Activated T-helper 1 cell treated with anti-CD3 and anti-CD28 coated beads, Interleukin-12 subunit alpha, Interleukin-12 subunit beta, Interleukin-2, Interleukin-4 antibody, amounts not matched to agents 30 ng/mL and 10 ng/mL and 1 ng/mL, durations not matched to agents 14 hours and 24 hours and 36 hours (primary cell): ENCODE measurements at regions of chr12 and their contacts with region 1.

Region 1: GRCh38 chr12:6423267-6424007 is 21.3 kb upstream of the CD27 start:
- DNase-seq: peak; percentile 75
- H3K4me3 Mint-ChIP-seq: no peak overlapping the region
- H3K27ac Mint-ChIP-seq: peak overlapping the region; percentile 50
- H3K4me1 Mint-ChIP-seq: peaks cover 44% of the 10 kb centered on the region
- H3K27me3 Mint-ChIP-seq: peaks cover 1% of the 10 kb centered on the region

Region 2: GRCh38 chr12:6335451-6336078 is 87.9 kb before region 1 on chr12:
- intact Hi-C with region 1: loop called (anchors 1 kb)
- DNase-seq: peak; percentile 80
- H3K4me3 Mint-ChIP-seq: no peak overlapping the region
- H3K27ac Mint-ChIP-seq: no peak overlapping the region
- H3K4me1 Mint-ChIP-seq: peaks cover 37% of the 10 kb centered on the region
- H3K27me3 Mint-ChIP-seq: no peaks in the 10 kb centered on the region

Region 3: GRCh38 chr12:6383572-6384498 is 39.6 kb before region 1 on chr12 and contains the start of gene LTBR:
- intact Hi-C with region 1: no loop called
- DNase-seq: no peak
- H3K4me3 Mint-ChIP-seq: no peak within 1 kb of the TSS
- H3K27ac Mint-ChIP-seq: no peak within 1 kb of the TSS
- H3K4me1 Mint-ChIP-seq: no peaks in the 10 kb centered on the region
- H3K27me3 Mint-ChIP-seq: peaks cover 39% of the 10 kb centered on the region
- total RNA-seq, gene LTBR: 0.64 and 1.3 TPM in 2 replicates

Region 4: DNA sequence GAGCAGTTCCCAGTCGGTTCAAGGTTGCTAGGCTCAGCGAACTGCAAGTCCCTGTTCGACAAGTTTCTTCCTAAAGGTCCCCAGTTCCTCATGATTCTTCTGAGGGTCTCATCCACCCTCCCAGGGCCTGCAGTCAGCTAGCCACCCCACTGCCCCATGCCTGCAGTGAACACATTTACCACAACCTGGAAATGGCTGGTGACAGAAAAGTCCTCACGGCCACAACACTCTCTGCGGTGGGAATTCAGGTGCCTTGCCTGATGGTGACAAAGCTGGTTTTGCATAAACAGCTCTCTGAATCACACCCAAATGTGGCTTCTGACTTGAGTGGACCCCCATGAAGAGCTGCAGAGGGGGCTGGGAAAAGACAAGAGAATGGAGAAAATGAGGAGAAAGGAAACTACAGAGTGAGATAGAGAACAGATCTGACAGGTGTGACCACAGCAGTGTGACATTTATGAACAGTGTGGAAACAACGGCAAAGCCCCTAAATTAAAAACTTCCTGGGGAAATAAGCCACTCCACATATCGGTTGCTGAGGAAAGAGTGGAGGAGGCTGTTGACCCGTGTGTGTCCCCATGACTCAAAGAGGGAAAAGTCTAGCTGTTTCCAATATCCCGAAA is 20.0 kb after region 1 on chr12:
- intact Hi-C with region 1: loop called (anchors 1 kb)
- DNase-seq: no peak
- H3K4me3 Mint-ChIP-seq: peak overlapping the region; percentile 93
- H3K27ac Mint-ChIP-seq: peak overlapping the region; percentile 97
- H3K4me1 Mint-ChIP-seq: peaks cover 82% of the 10 kb centered on the region
- H3K27me3 Mint-ChIP-seq: no peaks in the 10 kb centered on the region

Region 5: DNA sequence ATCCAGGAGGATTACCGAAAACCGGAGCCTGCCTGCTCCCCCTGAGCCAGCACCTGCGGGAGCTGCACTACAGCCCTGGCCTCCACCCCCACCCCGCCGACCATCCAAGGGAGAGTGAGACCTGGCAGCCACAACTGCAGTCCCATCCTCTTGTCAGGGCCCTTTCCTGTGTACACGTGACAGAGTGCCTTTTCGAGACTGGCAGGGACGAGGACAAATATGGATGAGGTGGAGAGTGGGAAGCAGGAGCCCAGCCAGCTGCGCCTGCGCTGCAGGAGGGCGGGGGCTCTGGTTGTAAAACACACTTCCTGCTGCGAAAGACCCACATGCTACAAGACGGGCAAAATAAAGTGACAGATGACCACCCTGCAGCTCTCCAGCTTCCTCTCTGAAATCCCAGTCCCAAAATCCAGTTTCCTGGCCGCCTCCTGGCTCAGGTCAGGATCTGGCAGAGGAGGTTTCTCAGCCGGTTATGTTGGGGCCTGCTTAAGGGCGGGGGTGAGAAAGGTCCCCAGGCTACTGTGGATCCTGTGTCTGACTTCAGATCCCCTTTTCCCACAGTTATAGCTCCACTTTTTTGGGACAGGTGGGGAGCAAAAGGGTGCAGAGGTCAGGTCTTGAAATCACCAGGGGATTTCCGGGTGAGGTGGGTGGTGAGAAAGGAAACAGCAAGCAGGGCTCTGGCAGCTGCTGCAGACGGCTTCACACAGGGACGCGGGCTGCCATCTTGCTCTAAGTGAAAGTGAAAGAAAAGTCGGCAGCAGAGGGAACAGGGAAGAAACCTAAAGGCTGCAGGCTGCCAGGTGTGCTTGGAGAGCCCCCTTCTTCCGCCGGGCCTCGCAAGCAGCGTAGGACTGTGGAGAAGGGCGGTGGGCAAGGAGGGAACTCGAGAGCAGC is 28.2 kb after region 1 on chr12 and contains the start of gene TAPBPL:
- intact Hi-C with region 1: loop called (anchors 1 kb)
- DNase-seq: peak; percentile 79
- H3K4me3 Mint-ChIP-seq: peak within 1 kb of the TSS; percentile 98
- H3K27ac Mint-ChIP-seq: peak within 1 kb of the TSS; percentile 91
- H3K4me1 Mint-ChIP-seq: peaks cover 72% of the 10 kb centered on the region
- H3K27me3 Mint-ChIP-seq: no peaks in the 10 kb centered on the region
- total RNA-seq, gene TAPBPL: 34.1 and 34.3 TPM in 2 replicates

Region 6: DNA sequence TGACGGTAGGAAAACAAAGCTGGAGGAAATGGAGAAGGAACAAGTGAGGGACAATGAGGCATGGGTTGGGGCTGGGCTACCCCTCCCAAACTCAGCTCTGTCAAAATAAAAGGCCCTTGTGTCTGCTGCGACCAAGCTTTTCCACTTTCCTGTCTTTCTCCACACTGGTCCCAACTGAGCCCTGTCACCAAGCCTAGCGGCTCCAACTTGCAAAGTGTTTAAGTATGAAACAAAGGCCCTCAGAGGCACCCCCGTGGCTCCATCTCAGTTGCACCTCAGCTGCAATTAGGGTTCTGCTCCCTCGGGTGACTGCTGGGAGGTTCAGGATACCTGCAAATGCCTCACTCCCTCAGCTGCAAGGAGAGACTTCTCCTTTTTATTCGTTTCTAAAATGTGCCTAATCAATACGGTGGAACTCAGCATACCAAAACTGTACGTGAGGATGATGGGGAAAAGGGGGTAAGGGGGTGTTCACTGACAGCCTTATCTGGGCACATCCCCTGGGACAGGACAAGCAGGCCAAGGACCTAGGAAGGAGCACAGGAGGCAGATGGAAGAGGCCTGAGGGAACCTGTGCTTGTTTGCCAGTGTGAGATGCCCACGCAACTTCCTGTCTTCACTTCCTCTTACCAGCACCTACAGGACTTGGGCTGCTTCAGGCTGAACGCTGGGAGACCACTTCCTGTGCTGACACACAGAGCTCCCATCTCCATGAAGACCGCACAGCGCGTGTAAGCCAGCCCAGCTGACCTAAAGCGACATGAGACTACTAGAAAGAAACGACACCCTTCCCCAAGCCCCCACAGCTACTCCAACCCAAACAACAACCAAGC is 38.2 kb after region 1 on chr12:
- intact Hi-C with region 1: loop called (anchors 1 kb)
- DNase-seq: peak; percentile 82
- H3K4me3 Mint-ChIP-seq: peak overlapping the region; percentile 78
- H3K27ac Mint-ChIP-seq: peak overlapping the region; percentile 99
- H3K4me1 Mint-ChIP-seq: peaks cover 83% of the 10 kb centered on the region
- H3K27me3 Mint-ChIP-seq: no peaks in the 10 kb centered on the region

Region 7: DNA sequence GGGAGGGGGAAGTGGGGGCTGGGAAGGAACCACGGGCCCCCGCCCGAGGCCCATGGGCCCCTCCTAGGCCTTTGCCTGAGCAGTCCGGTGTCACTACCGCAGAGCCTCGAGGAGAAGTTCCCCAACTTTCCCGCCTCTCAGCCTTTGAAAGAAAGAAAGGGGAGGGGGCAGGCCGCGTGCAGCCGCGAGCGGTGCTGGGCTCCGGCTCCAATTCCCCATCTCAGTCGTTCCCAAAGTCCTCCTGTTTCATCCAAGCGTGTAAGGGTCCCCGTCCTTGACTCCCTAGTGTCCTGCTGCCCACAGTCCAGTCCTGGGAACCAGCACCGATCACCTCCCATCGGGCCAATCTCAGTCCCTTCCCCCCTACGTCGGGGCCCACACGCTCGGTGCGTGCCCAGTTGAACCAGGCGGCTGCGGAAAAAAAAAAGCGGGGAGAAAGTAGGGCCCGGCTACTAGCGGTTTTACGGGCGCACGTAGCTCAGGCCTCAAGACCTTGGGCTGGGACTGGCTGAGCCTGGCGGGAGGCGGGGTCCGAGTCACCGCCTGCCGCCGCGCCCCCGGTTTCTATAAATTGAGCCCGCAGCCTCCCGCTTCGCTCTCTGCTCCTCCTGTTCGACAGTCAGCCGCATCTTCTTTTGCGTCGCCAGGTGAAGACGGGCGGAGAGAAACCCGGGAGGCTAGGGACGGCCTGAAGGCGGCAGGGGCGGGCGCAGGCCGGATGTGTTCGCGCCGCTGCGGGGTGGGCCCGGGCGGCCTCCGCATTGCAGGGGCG is 110.7 kb after region 1 on chr12 and contains the start of gene GAPDH:
- intact Hi-C with region 1: loop called (anchors 1 kb)
- DNase-seq: peak; percentile 86
- H3K4me3 Mint-ChIP-seq: peak within 1 kb of the TSS; percentile 91
- H3K27ac Mint-ChIP-seq: peak within 1 kb of the TSS; percentile 99
- H3K4me1 Mint-ChIP-seq: peaks cover 58% of the 10 kb centered on the region
- H3K27me3 Mint-ChIP-seq: no peaks in the 10 kb centered on the region
- total RNA-seq, gene GAPDH: 4,315 and 4,318 TPM in 2 replicates

Region 8: DNA sequence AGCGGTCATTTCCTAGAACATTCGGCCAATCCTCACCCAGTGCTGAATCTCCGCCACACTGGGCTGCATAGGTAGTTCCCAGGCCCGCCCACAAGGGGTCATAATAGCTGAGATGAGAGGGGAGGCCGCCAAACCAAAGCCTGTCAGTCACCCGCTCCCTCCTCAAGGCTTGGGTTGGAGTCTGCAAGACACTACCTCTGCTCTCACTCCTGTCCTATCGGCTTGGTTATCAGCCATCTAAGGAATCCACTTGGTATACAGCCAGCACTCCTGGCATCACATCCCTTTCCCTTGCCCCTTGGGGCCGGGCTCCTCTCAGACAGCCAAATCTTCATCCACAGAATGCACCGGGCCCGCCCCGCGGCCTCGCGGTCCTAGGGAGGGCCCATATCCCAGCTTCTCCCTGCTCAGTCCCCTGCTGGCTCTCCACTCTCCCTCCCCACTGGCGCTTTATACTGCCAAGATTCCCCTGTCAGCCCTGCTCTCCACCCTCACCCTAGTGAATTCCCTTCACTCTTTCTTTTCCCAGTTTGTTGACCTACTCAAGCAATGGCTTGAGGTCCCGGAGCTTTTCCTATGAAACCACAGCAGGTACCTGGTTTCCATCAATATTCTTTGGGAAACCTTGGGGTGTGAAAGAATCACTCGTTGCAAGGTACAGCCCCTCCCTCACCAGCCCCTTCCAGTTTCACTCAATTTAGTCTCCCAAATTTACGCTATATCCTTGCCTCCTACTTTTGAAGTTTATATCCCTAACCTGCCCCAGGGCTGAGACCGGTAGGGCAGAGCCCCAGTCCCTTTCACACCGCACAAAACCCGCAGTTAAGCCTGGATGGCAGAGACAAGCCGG is 131.0 kb after region 1 on chr12:
- intact Hi-C with region 1: loop called (anchors 1 kb)
- DNase-seq: no peak
- H3K4me3 Mint-ChIP-seq: peak overlapping the region; percentile 88
- H3K27ac Mint-ChIP-seq: peak overlapping the region; percentile 61
- H3K4me1 Mint-ChIP-seq: peaks cover 36% of the 10 kb centered on the region
- H3K27me3 Mint-ChIP-seq: no peaks in the 10 kb centered on the region

Region 9: GRCh38 chr12:6827982-6828780 is 404.7 kb after region 1 on chr12 and contains the start of gene P3H3:
- intact Hi-C with region 1: no loop called
- DNase-seq: no peak
- H3K4me3 Mint-ChIP-seq: peak within 1 kb of the TSS; percentile 90
- H3K27ac Mint-ChIP-seq: peak within 1 kb of the TSS; percentile 78
- H3K4me1 Mint-ChIP-seq: peaks cover 31% of the 10 kb centered on the region
- H3K27me3 Mint-ChIP-seq: peaks cover 48% of the 10 kb centered on the region
- total RNA-seq, gene P3H3: 3.5 and 4.0 TPM in 2 replicates